Vagina (tissue), 2 donors: ENCODE measurements at regions of chr22 and their contacts with region 1.

Region 1: DNA sequence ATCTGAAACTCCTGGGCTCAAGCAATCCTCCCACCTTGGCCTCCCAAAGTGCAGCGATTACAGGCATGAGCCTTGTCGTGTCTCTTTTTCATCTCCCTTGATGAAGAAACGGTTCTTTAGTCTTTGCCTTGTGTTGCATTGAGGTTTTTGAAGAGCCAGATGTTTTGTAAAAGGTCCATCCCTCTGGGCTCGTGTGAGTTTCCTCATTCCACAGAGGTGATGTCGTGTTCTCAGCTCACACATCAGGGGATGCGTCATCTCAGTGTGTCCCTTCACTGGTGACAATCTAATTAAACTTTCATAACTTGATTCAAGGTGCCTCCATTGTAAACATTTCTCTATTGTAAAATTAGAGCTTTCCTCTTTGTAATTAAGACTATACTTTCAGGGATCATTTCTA is 29.7 kb upstream of the TEF start:
- DNase-seq: no peak
- H3K4me3 ChIP-seq: no peak overlapping the region
- H3K27ac ChIP-seq: no peak overlapping the region
- H3K4me1 ChIP-seq: no peaks in the 10 kb centered on the region
- H3K27me3 ChIP-seq: no peaks in the 10 kb centered on the region
- CTCF ChIP-seq: no peak
- POLR2A ChIP-seq: no peak

Region 2: GRCh38 chr22:39634671-39635405 is 1717.2 kb before region 1 on chr22:
- intact Hi-C with region 1: loop called (anchors 5 kb)
- DNase-seq: no peak
- H3K4me3 ChIP-seq: no peak overlapping the region
- H3K27ac ChIP-seq: no peak overlapping the region
- H3K4me1 ChIP-seq: no peaks in the 10 kb centered on the region
- H3K27me3 ChIP-seq: no peaks in the 10 kb centered on the region
- CTCF ChIP-seq: no peak
- POLR2A ChIP-seq: no peak

Region 3: GRCh38 chr22:40588726-40589125 is 763.3 kb before region 1 on chr22:
- intact Hi-C with region 1: no loop called
- DNase-seq: no peak
- H3K4me3 ChIP-seq: no peak overlapping the region
- H3K27ac ChIP-seq: no peak overlapping the region
- H3K4me1 ChIP-seq: peaks cover 21% of the 10 kb centered on the region
- H3K27me3 ChIP-seq: no peaks in the 10 kb centered on the region
- CTCF ChIP-seq: no peak
- POLR2A ChIP-seq: no peak